Activated CD4-positive, alpha-beta T cell treated with anti-CD3 and anti-CD28 coated beads, Interleukin-2, amount 10 ng/mL, durations not matched to agents 24 days and 14 days (primary cell): ENCODE measurements at regions of chr11 and their contacts with region 1.

Region 1: DNA sequence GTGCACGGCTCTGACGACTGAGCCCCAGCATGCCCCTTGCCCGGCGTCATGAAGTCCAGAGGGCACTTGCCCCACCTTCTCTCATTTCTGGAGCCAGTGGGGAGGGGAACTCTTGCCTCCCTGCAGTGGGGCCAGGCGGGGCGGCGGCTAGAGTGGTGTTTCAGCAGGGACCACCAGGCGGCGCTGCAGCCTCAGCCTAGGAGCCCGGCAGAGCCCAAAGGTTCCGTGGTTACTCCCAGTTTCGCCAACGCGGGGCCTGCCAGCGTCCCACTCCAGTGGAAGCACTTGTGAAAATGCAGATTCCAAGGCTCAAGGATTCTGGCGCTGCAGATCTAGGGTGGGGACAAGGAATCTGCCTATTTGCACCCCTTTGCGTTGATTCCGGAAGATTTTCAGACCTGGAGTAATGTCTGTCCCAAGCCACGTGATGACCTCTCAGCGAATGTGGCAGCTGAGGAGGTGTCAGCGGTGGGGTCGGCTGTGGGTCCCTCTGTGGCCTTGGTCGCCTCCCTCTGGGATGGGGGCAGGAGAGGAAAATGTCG is 55.7 kb downstream of the CD82 start:
- DNase-seq: peak; percentile 88
- H3K4me3 Mint-ChIP-seq: no peak overlapping the region
- H3K27ac Mint-ChIP-seq: no peak overlapping the region
- H3K4me1 Mint-ChIP-seq: peaks cover 27% of the 10 kb centered on the region
- H3K27me3 Mint-ChIP-seq: no peaks in the 10 kb centered on the region

Region 2: DNA sequence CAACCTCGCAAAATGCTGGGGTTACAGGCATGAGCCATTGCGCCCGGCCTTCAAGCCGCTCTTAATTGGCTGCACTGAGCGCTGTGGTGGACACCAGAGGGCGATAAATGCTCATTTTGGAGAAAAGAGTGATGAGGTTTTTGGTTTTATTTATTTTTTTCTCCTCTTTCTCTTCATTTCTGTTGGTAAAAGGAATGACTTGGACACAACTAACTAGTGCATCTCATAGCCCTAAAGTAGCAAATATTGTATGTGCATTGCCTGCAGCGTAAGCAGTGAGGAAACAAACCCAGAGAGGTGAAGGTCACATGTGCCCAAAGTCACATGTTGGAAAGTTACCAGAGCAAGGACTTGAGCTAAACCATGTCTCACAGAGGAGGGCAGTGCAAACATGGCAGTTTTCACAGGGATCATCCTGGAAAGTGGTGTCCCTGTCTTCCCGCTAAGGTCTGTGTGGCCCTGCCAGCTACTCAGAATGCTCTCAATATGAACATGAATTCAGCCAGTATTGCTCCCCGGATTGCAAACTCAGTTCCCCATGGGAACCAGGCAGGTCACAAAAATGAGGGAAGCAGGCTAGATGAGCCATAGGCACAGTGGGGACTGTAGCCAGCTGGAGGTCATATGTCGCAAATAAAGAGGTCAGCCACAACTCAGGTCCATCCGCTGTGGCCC is 64.3 kb before region 1 on chr11:
- intact Hi-C with region 1: loop called (anchors 1 kb)
- DNase-seq: peak; percentile 90
- H3K4me3 Mint-ChIP-seq: no peak overlapping the region
- H3K27ac Mint-ChIP-seq: peak overlapping the region; percentile 68
- H3K4me1 Mint-ChIP-seq: peaks cover 25% of the 10 kb centered on the region
- H3K27me3 Mint-ChIP-seq: peaks cover 4% of the 10 kb centered on the region

Region 3: GRCh38 chr11:44709281-44709562 is 88.0 kb after region 1 on chr11:
- intact Hi-C with region 1: no loop called
- DNase-seq: no peak
- H3K4me3 Mint-ChIP-seq: no peak overlapping the region
- H3K27ac Mint-ChIP-seq: no peak overlapping the region
- H3K4me1 Mint-ChIP-seq: peaks cover 12% of the 10 kb centered on the region
- H3K27me3 Mint-ChIP-seq: peaks cover 16% of the 10 kb centered on the region

Region 4: GRCh38 chr11:44727373-44728287 is 106.4 kb after region 1 on chr11:
- intact Hi-C with region 1: loop called (anchors 10 kb)
- DNase-seq: peak; percentile 93
- H3K4me3 Mint-ChIP-seq: peak overlapping the region; percentile 87
- H3K27ac Mint-ChIP-seq: peak overlapping the region; percentile 10
- H3K4me1 Mint-ChIP-seq: peaks cover 38% of the 10 kb centered on the region
- H3K27me3 Mint-ChIP-seq: peaks cover 41% of the 10 kb centered on the region